ENCODE measurements at regions of chr3 and their contacts with region 1.

Region 1: DNA sequence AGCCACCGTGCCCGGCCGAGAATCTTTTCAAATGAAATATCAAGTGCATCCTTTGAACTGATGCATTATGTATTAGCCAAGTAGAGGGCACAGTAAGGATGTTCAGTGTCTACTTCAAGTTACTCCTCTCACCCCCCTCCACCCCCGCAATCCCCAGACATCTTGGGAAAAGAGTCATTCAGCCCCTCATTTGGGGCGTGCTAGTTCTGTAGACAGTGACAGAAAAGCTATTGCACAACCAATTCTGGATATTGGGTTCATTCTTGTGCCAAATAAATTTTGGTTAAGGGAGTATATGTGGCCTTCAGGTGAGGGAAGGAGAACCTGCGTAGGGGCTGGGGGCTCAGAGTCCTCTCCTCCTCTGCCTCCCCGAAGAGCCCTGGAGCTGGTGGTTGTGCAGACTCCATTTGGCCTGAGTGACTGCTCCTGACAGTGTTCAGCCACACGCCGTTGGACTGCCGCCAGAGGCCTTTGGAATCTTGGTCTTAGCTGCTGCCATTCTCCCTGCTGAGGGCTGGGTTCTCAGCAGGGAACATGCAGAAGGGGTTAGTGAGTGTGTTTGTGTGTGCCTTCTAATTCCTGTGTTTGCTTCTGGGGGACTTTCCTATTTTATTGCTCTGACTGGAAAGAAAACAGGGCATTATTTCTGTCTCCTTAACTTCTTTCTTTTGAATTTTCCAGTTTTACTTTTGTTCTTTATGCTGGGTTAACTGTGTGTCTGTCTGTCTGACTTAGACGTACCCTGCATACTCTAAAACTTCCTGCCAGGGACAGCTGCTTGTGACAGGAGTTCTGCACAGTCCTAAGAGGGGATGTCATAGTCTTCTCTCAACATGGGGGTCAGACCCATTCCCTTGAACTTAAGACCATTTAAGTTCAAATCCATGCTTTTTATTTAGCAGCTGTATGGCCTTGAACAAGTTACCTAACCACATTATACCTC is 21.0 kb downstream of the RARB start:
- DNase-seq: peak in 1 of 4 experiments; percentile 28
- ATAC-seq: peak; percentile 66
- H3K4me3 ChIP-seq: no peak overlapping the region
- H3K27ac ChIP-seq: no peak overlapping the region
- H3K4me1 ChIP-seq: no peaks in the 10 kb centered on the region
- H3K27me3 ChIP-seq: peaks cover 4 to 14% of the 10 kb centered on the region in 2 experiments; a peak in 3 of 5 replicates
- CTCF ChIP-seq: no peak
- EP300 ChIP-seq: no peak
- POLR2A ChIP-seq: no peak
- RAD21 ChIP-seq: no peak

Region 2: DNA sequence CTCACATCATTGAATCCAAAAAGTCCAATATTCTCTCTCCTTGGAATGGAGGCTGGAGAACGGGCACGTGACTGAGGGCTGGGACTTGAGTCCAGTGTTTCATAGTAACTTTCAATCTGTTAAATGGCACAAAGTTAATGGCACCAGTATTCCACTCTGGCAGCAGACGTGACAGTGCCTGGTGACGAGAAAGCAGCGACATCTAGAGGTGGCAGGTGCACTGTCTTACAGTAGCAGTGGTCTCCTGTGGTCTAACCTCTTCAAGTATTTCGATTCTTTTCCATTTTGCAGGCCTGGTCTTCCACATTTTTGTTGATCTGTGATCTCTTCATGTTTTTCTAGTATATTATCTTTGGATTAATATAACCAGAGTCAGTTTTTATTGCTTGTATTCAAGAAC is 448.0 kb after region 1 on chr3:
- CTCF ChIA-PET with region 1: no interaction called
- POLR2A ChIA-PET with region 1: no interaction called
- in situ Hi-C with region 1: no loop called
- intact Hi-C with region 1: loop called (anchors 10 kb)
- DNase-seq: peak; percentile 52 to 72 (median 62)
- ATAC-seq: peak; percentile 95
- H3K4me3 ChIP-seq: no peak overlapping the region
- H3K27ac ChIP-seq: no peak overlapping the region
- H3K4me1 ChIP-seq: peaks cover 0 to 6% of the 10 kb centered on the region in 2 experiments; a peak in 2 of 5 replicates
- H3K27me3 ChIP-seq: no peaks in the 10 kb centered on the region
- CTCF ChIP-seq: peak; percentile 79 to 89 (median 80)
- EP300 ChIP-seq: no peak
- POLR2A ChIP-seq: no peak
- RAD21 ChIP-seq: peak; percentile 56 to 74